Ovary (tissue), 10 donors: ENCODE measurements at regions of chr11 and their contacts with region 1.

Region 1: GRCh38 chr11:35617687-35618496 is at the start of gene FJX1:
- DNase-seq: peak; percentile 66 to 78 (median 76)
- H3K4me3 ChIP-seq: peak within 1 kb of the TSS; percentile 39
- H3K27ac ChIP-seq: peak within 1 kb of the TSS; percentile 54 to 69
- H3K4me1 ChIP-seq: peaks cover 4% of the 10 kb centered on the region
- H3K27me3 ChIP-seq: no peaks in the 10 kb centered on the region
- CTCF ChIP-seq: no peak
- EP300 ChIP-seq: no peak
- POLR2A ChIP-seq: no peak
- total RNA-seq, gene FJX1: 6.4 to 40.2 (median 9.4) TPM

Region 2: GRCh38 chr11:35662649-35663407 is 44.9 kb after region 1 on chr11 and contains the start of gene TRIM44:
- intact Hi-C with region 1: loop called in 1 of 4 experiments (anchors 5 kb)
- DNase-seq: peak; percentile 76 to 88 (median 83)
- H3K4me3 ChIP-seq: peak within 1 kb of the TSS; percentile 71
- H3K27ac ChIP-seq: peak within 1 kb of the TSS; percentile 94 to 95
- H3K4me1 ChIP-seq: peaks cover 6% of the 10 kb centered on the region
- H3K27me3 ChIP-seq: no peaks in the 10 kb centered on the region
- CTCF ChIP-seq: no peak
- EP300 ChIP-seq: no peak
- POLR2A ChIP-seq: peak; percentile 44
- total RNA-seq, gene TRIM44: 13.0 to 54.6 (median 45.7) TPM

Region 3: DNA sequence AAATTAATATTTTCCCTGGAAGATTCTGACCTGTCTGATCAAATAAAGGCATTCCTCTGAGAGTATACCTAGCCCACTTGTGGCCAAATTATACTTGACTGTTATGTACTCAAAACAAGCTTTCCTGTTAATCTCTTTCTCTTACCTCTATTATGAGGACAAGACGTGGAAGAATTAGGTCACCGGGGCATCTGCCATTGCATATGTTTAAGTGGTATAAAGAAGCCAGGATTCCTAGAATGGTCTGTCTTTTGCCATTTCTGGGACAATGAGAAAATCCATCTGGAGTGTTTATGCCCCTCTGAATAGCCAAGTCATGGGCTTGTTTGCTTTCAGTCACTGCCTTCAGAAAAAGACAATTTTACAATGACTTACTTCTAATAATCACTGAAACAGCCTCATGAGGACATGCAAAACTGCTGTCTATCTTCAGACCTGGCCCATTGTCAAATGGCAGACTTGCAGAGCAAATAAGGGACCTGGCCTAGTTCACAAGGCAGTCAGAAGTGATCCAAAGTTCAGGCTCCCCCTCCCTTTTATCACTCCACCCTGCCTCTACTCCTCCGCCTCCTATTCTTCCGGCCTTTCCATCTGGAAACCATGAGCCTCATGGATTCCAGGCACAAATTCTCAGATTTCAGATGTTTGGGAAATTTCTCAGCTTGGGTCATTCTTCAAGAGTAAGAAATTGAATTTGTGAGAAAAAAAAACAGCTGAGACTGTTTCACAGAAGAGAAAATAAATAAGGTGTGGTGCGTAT is 197.8 kb after region 1 on chr11:
- intact Hi-C with region 1: loop called in 1 of 4 experiments (anchors 10 kb)
- DNase-seq: peak in 3 of 5 donors; percentile 23 to 38 (median 33)
- H3K4me3 ChIP-seq: no peak overlapping the region
- H3K27ac ChIP-seq: no peak overlapping the region
- H3K4me1 ChIP-seq: peaks cover 8% of the 10 kb centered on the region
- H3K27me3 ChIP-seq: no peaks in the 10 kb centered on the region
- CTCF ChIP-seq: no peak
- EP300 ChIP-seq: no peak
- POLR2A ChIP-seq: no peak

Region 4: DNA sequence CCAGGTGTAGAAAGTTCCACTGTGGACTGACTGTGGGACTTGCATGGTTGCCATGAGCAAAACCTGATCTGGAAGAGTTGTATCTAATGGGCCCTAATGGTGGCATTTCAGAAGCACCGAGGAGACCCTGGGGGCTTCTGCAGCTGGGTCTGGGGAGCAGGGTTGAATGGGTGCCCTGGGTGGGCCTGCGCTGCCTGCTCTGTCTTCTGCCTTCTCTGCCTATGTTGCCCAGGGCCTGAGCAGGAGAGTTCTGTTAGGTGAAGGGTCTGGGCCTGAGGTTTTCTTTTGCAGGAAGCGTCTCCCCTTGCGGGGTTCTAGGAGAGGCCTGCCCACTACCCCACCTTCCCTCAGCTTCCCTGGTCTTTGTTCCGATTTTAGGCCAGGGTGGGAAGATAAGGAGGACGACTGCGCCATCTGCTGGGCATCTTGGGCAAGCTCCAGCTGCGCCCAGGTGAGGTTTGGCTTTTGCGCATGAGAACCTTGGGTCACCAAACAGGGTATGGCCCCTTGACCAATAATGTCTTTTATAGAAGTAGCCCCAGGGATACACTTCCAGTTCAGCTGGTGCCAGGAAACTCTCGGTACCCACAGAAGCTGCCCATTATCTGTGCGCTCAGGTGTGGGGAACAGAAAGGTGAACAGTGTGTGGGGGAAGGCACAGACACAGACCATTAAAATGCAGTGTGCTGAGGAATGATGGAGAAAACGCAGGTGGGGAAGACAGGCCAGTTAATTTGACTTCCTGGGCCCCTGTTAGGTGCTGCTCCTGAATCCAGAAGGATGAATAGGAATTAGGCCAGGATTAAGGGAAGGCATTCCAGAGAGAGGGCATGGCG is 648.1 kb after region 1 on chr11:
- intact Hi-C with region 1: loop called (anchors 5 kb)
- DNase-seq: peak; percentile 34 to 74 (median 64)
- H3K4me3 ChIP-seq: no peak overlapping the region
- H3K27ac ChIP-seq: no peak overlapping the region
- H3K4me1 ChIP-seq: no peaks in the 10 kb centered on the region
- H3K27me3 ChIP-seq: no peaks in the 10 kb centered on the region
- CTCF ChIP-seq: peak in 2 of 3 donors; percentile 74 to 75
- EP300 ChIP-seq: no peak
- POLR2A ChIP-seq: no peak

Region 5: GRCh38 chr11:36492724-36493304 is 874.9 kb after region 1 on chr11:
- intact Hi-C with region 1: loop called in 1 of 4 experiments (anchors 10 kb)
- DNase-seq: no peak
- H3K4me3 ChIP-seq: no peak overlapping the region
- H3K27ac ChIP-seq: no peak overlapping the region
- H3K4me1 ChIP-seq: no peaks in the 10 kb centered on the region
- H3K27me3 ChIP-seq: no peaks in the 10 kb centered on the region
- CTCF ChIP-seq: peak; percentile 53 to 69 (median 63)
- EP300 ChIP-seq: no peak
- POLR2A ChIP-seq: no peak